Endothelial cell of umbilical vein (primary cell): ENCODE measurements at regions of chr5 and their contacts with region 1.

Region 1: DNA sequence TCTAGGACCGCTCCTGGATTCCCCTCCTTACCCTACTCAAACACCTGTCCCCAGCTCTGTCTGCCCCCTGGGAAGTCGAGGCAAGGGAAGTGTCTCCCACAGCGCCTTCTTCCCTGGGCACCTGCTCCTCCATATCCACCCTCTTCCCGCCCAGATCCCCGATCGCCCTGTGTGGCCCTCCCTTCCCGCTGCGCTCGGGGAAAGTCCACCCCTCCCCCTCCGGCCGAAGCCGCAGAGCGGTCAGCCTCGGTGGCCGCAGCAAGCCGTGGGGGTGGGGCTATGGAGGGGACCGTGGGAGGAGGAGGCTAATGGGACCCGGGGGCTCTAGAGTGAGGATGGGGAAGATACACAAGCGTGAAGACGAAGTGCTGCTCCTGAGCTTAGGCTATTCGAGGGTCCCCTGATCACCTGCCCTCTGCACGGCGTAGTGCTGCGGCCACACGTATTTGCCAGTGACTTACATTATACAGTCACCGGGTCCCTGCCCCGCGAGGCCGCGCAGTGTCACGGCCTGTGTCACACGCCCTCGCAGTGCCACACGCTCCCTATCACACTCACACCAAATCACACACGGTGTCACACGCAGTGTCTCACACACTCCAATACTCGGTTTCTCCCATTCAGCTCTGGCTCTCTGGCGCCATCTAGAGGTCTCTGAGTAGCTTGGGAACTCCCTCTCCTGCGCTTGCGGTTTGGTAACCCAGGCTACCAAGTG is 658 bp upstream of the PCDH1 start:
- DNase-seq: peak; percentile 92
- H3K4me3 ChIP-seq: peak overlapping the region; percentile 37 to 58 (median 52)
- H3K27ac ChIP-seq: no peak overlapping the region
- H3K4me1 ChIP-seq: peaks cover 22% of the 10 kb centered on the region
- H3K27me3 ChIP-seq: peaks cover 26 to 33% of the 10 kb centered on the region in 2 experiments
- CTCF ChIP-seq: peak; percentile 91 to 94
- POLR2A ChIP-seq: no peak

Region 2: GRCh38 chr5:141664732-141665461 is 214.0 kb before region 1 on chr5:
- CTCF ChIA-PET with region 1: interaction called, 43 read pairs
- POLR2A ChIA-PET with region 1: interaction called, 4 read pairs
- dilution Hi-C with region 1: no loop called
- intact Hi-C with region 1: loop called (anchors 1 kb)
- DNase-seq: peak; percentile 73
- H3K4me3 ChIP-seq: no peak overlapping the region
- H3K27ac ChIP-seq: no peak overlapping the region
- H3K4me1 ChIP-seq: peaks cover 4% of the 10 kb centered on the region
- H3K27me3 ChIP-seq: no peaks in the 10 kb centered on the region
- CTCF ChIP-seq: peak; percentile 85 to 90
- POLR2A ChIP-seq: no peak

Region 3: GRCh38 chr5:141708016-141708415 is 170.9 kb before region 1 on chr5:
- CTCF ChIA-PET with region 1: interaction called, 184 read pairs
- POLR2A ChIA-PET with region 1: no interaction called
- dilution Hi-C with region 1: no loop called
- intact Hi-C with region 1: no loop called
- DNase-seq: no peak
- H3K4me3 ChIP-seq: no peak overlapping the region
- H3K27ac ChIP-seq: no peak overlapping the region
- H3K4me1 ChIP-seq: no peaks in the 10 kb centered on the region
- H3K27me3 ChIP-seq: peaks cover 22 to 25% of the 10 kb centered on the region in 2 experiments
- CTCF ChIP-seq: no peak
- POLR2A ChIP-seq: no peak

Region 4: DNA sequence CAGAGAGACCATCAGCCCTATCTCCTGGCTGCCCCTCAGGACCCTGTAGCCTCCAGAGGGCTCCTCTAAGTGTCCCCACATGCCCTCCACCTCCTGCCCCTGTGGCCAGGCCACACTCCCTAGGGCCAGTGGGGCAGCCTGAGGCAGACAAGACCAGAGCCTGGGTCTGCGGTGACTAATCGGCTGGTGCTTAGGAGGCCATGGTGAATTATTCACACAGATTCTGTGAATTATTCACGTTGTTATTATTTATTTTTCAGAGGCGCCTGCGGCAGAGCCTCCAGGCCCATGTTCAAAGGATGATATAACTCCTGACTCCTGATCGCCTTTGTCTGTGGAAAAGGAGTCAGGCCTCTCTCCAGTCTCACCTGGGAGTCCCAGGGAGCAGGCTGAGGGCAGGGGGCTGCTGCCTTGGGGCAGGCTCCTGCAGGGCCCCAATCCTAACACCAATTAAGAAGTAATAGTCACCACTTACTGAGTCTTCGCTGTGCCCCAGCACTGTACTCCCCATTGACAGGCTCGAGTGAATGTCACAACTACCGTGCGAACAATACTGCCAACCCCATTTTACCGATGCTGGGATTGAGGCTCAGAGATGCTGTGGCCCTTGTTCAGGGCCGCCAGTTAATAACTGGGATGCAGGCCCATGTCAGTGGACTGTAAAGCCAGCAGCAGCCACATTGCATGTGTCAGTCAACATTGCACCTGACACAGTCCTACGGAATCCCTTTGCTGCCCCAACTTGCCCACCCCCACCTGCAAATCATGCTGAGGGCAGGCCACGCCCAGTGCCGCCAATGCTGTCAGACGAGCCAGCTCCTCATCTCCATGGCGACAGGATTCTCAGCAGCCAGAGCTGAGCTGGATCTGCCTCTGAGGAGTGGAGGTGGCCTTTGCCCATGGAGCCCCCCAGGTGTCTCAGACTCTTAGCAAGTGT is 95.6 kb before region 1 on chr5:
- CTCF ChIA-PET with region 1: interaction called, 16 read pairs
- POLR2A ChIA-PET with region 1: no interaction called
- dilution Hi-C with region 1: no loop called
- intact Hi-C with region 1: no loop called
- DNase-seq: no peak
- H3K4me3 ChIP-seq: no peak overlapping the region
- H3K27ac ChIP-seq: no peak overlapping the region
- H3K4me1 ChIP-seq: no peaks in the 10 kb centered on the region
- H3K27me3 ChIP-seq: peaks cover 1 to 2% of the 10 kb centered on the region in 2 experiments
- CTCF ChIP-seq: no peak
- POLR2A ChIP-seq: no peak

Region 5: DNA sequence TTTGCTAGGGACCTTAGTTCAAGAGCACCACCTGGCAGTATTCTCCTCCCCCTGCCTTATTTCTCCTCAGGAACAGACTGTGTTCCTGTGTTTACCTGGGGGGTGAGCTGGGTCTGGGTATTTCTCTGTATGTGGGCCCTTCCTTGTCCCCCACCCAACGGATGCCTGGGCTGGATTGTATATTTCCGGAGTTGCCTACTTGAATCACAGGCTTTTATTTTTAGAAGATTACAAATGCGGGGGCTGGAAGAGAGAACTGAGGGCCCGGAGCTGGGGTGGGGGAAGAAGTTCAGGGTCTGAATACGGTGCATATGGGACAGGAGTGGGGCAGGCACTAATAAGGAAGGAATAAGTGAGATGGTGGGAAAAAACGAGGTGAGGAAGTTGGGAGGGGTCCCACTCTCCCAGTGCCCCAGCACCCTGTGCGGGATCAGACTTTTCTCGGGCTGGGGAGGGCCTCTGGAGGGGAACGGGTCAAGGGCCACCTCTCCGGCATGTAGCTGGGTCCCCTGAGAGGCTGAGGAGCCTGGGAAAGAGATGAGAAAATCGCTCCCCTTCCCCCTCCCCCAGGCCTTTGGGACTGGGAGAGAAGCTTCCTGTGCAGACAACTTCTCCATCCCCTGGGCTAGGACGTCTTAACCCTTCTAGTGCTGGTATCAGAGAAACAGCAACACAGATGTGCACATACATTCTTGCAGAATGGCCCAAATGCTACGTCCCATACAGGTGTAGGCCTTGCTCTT is 42.8 kb before region 1 on chr5:
- CTCF ChIA-PET with region 1: interaction called, 21 read pairs
- POLR2A ChIA-PET with region 1: no interaction called
- dilution Hi-C with region 1: no loop called
- intact Hi-C with region 1: loop called (anchors 5 kb)
- DNase-seq: peak; percentile 87
- H3K4me3 ChIP-seq: no peak overlapping the region
- H3K27ac ChIP-seq: peak overlapping the region; percentile 78
- H3K4me1 ChIP-seq: peaks cover 66% of the 10 kb centered on the region
- H3K27me3 ChIP-seq: no peaks in the 10 kb centered on the region
- CTCF ChIP-seq: no peak
- POLR2A ChIP-seq: no peak

Region 6: GRCh38 chr5:141914199-141914743 is 35.4 kb after region 1 on chr5:
- CTCF ChIA-PET with region 1: interaction called, 14 read pairs
- POLR2A ChIA-PET with region 1: no interaction called
- dilution Hi-C with region 1: no loop called
- intact Hi-C with region 1: no loop called
- DNase-seq: peak; percentile 9
- H3K4me3 ChIP-seq: peak overlapping the region in 1 of 3 experiments; percentile 20
- H3K27ac ChIP-seq: no peak overlapping the region
- H3K4me1 ChIP-seq: peaks cover 3% of the 10 kb centered on the region
- H3K27me3 ChIP-seq: peaks cover 9 to 14% of the 10 kb centered on the region in 2 experiments
- CTCF ChIP-seq: peak in 1 of 2 donors; percentile 43
- POLR2A ChIP-seq: no peak